HEK293 (cell line): ENCODE measurements at regions of chr10 and their contacts with region 1.

Region 1: GRCh38 chr10:87656431-87657072 is 3.1 kb upstream of the PAPSS2 start:
- H3K4me3 ChIP-seq: no peak overlapping the region
- H3K27ac ChIP-seq: no peak overlapping the region
- H3K4me1 ChIP-seq: peaks cover 17% of the 10 kb centered on the region
- CTCF ChIP-seq: peak; percentile 69; the same call in 1 of the 2 replicates

Region 2: DNA sequence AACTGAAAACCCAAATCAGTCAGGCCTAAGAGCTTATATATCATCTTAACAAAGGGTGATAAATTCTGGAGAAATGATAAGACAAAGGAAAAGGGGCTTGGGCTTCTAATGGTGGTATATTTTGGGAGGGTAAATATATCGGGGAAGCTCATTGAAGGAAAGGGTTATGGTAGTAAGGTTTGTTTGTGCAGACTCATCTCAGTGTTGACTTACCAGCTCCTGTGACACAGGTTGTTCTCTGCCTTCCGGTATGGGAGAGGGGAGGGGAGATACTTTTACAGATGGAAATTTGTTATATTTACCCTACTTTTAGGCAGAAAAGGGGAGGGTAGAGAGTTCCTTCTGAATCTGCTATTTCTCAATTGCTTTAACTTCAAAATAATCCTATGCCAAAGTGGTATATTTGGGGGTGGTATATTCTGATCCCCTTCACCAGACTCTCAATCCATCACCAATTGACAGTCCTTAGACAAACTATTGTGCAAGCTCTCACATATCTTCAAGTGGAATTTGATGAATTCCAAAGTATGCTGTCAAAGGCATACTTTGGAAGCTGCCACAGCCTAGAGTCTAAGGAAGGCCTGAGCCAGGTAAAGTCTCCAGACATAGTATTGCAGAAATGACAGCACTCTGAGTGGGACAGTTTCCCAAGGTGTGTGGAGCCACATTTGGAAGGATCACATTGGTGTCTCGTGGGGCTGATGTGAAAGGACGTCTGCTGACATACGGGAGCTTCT is 10.2 kb before region 1 on chr10:
- CTCF ChIA-PET with region 1: interaction called, 10 read pairs
- POLR2A ChIA-PET with region 1: no interaction called
- H3K4me3 ChIP-seq: no peak overlapping the region
- H3K27ac ChIP-seq: no peak overlapping the region
- H3K4me1 ChIP-seq: no peaks in the 10 kb centered on the region
- CTCF ChIP-seq: no peak

Region 3: DNA sequence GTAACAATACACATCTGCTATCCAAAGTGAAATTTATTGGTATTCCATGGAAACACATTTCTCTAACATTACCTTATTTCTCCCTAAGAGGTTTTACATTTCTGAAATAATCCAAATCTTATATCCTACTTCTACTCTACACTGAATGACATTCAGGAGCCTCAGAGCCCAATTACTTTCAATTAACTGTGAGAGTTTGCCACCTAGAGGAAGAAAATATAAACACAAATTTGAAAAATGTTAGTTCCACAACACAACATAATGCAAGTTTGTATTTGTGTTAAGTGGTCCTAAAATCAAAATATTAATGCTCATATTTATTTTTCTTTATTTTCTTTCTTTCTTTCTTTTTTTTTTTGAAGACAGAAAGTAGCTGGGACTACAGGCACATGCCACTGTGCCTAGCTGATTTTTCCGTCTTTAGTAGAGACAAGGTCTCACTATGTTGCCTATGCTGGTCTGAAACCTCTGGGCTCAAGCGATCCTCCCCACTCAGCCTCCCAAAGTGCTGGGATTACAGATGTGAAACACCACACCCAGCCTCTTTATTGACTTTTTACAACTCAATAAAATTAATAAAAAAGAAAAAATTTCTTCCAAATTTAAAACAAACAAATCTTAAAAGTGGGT is 115.4 kb after region 1 on chr10:
- CTCF ChIA-PET with region 1: interaction called, 12 read pairs
- POLR2A ChIA-PET with region 1: no interaction called
- H3K4me3 ChIP-seq: no peak overlapping the region
- H3K27ac ChIP-seq: no peak overlapping the region
- H3K4me1 ChIP-seq: peaks cover 4% of the 10 kb centered on the region
- CTCF ChIP-seq: no peak